ENCODE measurements at regions of chr13 and their contacts with region 1.

Region 1: DNA sequence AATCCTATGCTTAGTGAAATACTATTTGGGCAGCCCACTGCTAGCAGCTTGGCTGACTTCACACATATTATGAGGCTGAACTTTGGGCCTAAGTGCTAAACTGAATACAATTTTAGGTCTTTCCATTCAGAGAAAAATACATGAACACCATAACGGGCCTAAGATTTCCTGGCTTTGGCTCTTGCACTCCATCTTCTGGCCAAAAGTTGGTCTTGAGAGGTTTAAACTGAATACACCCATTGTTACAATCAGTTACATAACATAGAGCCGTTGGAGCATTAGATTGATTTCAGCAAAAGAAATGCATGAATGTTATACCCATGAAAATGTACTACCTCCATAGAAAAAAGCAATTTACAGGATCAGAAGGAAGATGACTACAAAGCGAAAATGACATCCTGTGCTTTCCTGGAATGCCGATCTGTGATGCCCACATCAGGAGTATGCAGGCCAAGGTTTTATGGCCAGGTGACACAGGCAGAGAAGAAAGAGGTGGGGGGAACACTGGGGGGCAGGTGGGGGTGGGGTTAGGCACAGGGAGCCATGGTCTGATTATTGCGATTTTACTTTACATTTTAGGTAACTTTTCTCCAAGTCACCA is 11.1 kb upstream of the SHISA2 start:
- DNase-seq: no peak
- H3K4me3 ChIP-seq: no peak overlapping the region
- H3K4me3 Mint-ChIP-seq: no peak overlapping the region
- H3K27ac ChIP-seq: no peak overlapping the region
- H3K27ac Mint-ChIP-seq: no peak overlapping the region
- H3K4me1 ChIP-seq: no peaks in the 10 kb centered on the region
- H3K4me1 Mint-ChIP-seq: no peaks in the 10 kb centered on the region
- H3K27me3 ChIP-seq: no peaks in the 10 kb centered on the region
- H3K27me3 Mint-ChIP-seq: peaks cover 3 to 10% (median 7%) of the 10 kb centered on the region in 3 donors
- CTCF ChIP-seq: peak; percentile 10

Region 2: DNA sequence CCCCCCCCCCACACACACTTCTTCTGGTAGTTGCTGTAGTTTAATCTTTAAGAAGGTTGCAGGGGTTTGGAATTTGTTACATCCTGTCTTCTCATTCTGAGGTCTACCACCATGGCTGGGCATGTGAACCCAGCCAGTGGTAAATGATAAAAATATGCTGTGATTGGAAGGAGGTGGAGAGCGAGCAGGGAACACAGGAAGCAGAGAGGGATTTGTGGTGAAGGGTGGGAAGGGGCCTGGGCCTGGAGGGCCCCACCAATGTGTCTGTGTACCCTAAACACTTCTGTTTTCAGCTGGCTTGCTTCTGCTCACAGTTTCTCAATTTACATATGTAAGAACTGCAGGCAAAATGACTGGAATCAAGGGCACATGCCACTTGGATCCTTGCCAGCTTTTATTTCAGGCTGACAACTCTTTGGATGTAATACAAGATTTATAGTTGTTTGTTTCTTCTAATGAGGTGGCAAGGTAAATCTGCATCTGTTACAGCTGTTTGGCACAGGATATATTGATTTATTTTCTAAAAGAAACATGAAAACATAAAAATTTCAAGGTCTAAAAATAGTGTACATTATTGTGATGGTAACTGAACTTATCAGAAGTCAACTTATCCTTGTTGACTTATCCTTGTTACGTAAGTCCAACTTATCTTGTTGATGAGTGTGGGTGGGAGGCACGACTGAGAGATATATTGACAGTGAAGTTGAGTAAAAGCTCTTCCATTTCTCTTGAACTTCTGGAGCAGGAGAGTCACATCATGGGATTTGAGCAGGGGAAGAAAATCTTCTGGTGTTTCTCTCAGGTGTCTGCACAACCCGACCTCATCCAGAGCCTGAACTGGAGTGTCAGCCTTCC is 324.4 kb before region 1 on chr13:
- intact Hi-C with region 1: no loop called
- DNase-seq: no peak
- H3K4me3 ChIP-seq: no peak overlapping the region
- H3K4me3 Mint-ChIP-seq: no peak overlapping the region
- H3K27ac ChIP-seq: no peak overlapping the region
- H3K27ac Mint-ChIP-seq: no peak overlapping the region
- H3K4me1 ChIP-seq: no peaks in the 10 kb centered on the region
- H3K4me1 Mint-ChIP-seq: no peaks in the 10 kb centered on the region
- H3K27me3 ChIP-seq: no peaks in the 10 kb centered on the region
- H3K27me3 Mint-ChIP-seq: peaks cover 0 to 5% (median 2%) of the 10 kb centered on the region in 3 donors
- CTCF ChIP-seq: no peak

Region 3: DNA sequence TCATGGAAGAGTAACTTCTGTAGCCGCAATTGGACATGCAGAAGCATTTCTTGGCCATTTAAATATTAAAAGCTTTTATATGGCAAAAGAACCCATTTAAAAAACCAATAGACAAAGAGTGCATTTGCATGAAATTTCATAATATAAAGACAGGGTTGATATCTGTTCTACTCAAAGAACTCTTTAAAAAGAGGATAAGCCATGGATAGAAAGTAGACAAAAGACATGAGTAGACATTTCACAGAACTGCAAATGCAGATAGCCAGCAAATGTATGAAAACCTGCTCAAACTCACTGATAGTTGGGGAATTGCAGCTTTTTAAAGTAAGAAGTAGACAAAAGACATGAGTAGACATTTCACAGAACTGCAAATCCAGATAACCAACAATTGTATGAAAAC is 229.2 kb before region 1 on chr13:
- intact Hi-C with region 1: loop called (anchors 5 kb)
- DNase-seq: no peak
- H3K4me3 ChIP-seq: no peak overlapping the region
- H3K4me3 Mint-ChIP-seq: no peak overlapping the region
- H3K27ac ChIP-seq: no peak overlapping the region
- H3K27ac Mint-ChIP-seq: no peak overlapping the region
- H3K4me1 ChIP-seq: no peaks in the 10 kb centered on the region
- H3K4me1 Mint-ChIP-seq: no peaks in the 10 kb centered on the region
- H3K27me3 ChIP-seq: no peaks in the 10 kb centered on the region
- H3K27me3 Mint-ChIP-seq: peaks cover 7 to 10% (median 9%) of the 10 kb centered on the region in 3 donors
- CTCF ChIP-seq: no peak

Region 4: GRCh38 chr13:26847281-26847680 is 784.3 kb after region 1 on chr13:
- intact Hi-C with region 1: no loop called
- DNase-seq: no peak
- H3K4me3 ChIP-seq: no peak overlapping the region
- H3K4me3 Mint-ChIP-seq: no peak overlapping the region
- H3K27ac ChIP-seq: no peak overlapping the region
- H3K27ac Mint-ChIP-seq: no peak overlapping the region
- H3K4me1 ChIP-seq: no peaks in the 10 kb centered on the region
- H3K4me1 Mint-ChIP-seq: no peaks in the 10 kb centered on the region
- H3K27me3 ChIP-seq: no peaks in the 10 kb centered on the region
- H3K27me3 Mint-ChIP-seq: peaks cover 0 to 14% (median 5%) of the 10 kb centered on the region in 3 donors
- CTCF ChIP-seq: no peak

Region 5: DNA sequence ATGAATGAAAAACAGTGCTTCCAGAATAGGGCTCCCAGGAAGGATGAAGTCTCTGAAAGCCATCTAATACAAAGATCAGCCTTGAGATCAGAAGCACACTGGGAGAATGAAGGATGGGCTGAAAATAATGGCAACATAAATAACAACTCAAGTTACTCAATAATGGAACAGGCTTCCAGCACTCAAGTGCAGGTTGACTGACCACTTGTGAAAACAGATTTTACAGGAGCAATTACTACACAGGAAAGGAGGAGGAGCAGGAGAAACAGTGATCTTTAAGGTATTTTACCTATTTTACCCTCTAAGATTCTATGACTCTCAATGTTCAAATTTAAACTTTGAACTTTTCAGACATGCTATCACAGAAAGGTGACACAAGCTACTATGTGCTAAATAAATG is 1002.6 kb after region 1 on chr13:
- intact Hi-C with region 1: no loop called
- DNase-seq: no peak
- H3K4me3 ChIP-seq: no peak overlapping the region
- H3K4me3 Mint-ChIP-seq: no peak overlapping the region
- H3K27ac ChIP-seq: no peak overlapping the region
- H3K27ac Mint-ChIP-seq: peak overlapping the region in 1 of 7 donors; percentile 76
- H3K4me1 ChIP-seq: no peaks in the 10 kb centered on the region
- H3K4me1 Mint-ChIP-seq: no peaks in the 10 kb centered on the region
- H3K27me3 ChIP-seq: no peaks in the 10 kb centered on the region
- H3K27me3 Mint-ChIP-seq: no peaks in the 10 kb centered on the region
- CTCF ChIP-seq: no peak

Region 6: DNA sequence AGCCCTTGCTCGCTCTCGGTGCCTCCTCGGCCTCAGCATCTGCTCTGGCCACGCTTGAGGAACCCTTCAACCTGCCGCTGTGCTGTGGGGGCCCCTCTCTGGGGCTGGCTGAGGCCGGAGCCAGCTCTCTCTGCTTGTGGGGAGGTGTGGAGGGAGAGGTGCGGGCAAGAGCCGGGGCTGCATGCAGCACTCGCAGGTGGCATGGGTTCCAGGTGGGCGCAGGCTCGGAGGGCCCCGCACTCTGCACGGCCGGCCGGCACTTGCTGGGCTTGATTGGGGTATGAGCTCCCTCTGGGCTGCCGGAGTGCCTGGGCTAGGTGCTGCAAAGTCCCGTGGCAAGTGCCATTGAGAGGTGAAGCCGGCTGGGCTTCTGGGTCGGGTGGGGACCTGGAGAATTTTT is 1156.7 kb after region 1 on chr13:
- intact Hi-C with region 1: no loop called
- DNase-seq: no peak
- H3K4me3 ChIP-seq: no peak overlapping the region
- H3K4me3 Mint-ChIP-seq: no peak overlapping the region
- H3K27ac ChIP-seq: no peak overlapping the region
- H3K27ac Mint-ChIP-seq: peak overlapping the region in 1 of 7 donors; percentile 13
- H3K4me1 ChIP-seq: no peaks in the 10 kb centered on the region
- H3K4me1 Mint-ChIP-seq: peaks cover 20% of the 10 kb centered on the region
- H3K27me3 ChIP-seq: no peaks in the 10 kb centered on the region
- H3K27me3 Mint-ChIP-seq: peaks cover 2% of the 10 kb centered on the region in 3 donors
- CTCF ChIP-seq: no peak

Measured in CD14-positive monocyte (primary cell).